ENCODE measurements at regions of chr9 and their contacts with region 1.

Region 1: DNA sequence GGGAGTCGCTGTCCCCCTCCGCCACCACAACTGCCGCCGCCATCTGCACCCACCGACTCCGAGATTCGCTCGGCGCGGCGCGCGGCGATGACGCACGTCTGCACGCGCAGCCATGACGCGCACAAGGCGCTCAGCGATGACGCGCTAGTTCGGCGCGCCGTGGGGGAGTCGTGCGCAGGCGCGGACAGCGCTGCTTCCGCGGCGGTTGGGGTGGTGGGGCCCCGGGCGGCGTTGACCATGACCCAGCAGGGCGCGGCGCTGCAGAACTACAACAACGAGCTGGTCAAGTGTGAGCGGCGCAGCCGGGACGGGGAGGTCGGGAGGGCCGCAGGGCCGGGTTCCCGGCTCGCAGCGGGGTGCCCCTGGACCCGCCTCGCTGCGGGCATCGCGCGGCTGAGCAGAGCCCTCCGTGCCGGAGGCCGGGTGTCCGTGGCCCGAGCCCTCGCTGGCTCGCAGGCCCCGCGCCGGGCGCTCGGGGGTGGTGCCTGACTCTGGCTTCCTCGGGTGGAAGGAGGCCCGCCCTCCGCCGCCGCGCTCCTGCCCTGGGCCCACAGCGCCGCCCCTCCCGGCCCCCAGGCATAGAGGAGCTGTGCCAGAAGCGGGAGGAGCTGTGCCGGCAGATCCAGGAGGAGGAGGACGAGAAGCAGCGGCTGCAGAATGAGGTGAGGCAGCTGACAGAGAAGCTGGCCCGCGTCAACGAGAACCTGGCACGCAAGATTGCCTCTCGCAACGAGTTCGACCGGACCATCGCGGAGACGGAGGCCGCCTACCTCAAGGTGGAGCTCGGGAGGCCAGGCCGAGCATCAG is at the starts of genes ANAPC2 and SSNA1:
- DNase-seq: peak; percentile 79 to 88
- ATAC-seq: peak; percentile 92 to 95
- H3K4me3 ChIP-seq: peak within 1 kb of the TSS; percentile 68 to 100 (median 97)
- H3K27ac ChIP-seq: peak within 1 kb of the TSS; percentile 85 to 98 (median 96)
- H3K4me1 ChIP-seq: peaks cover 39 to 44% of the 10 kb centered on the region in 2 donors
- H3K27me3 ChIP-seq: no peaks in the 10 kb centered on the region
- CTCF ChIP-seq: peak in 4 of 5 experiments; percentile 8 to 72 (median 38)
- POLR2A ChIP-seq: peak; percentile 84 to 92
- total RNA-seq, gene ANAPC2: 10.2 to 12.4 (median 10.8) TPM
- total RNA-seq, gene SSNA1: 73.3 to 164 (median 94.4) TPM

Region 2: GRCh38 chr9:137086531-137087408 is 101.9 kb before region 1 on chr9 and contains the start of gene MAN1B1:
- in situ Hi-C with region 1: no loop called
- intact Hi-C with region 1: loop called (anchors 1 kb)
- DNase-seq: peak; percentile 99
- ATAC-seq: peak; percentile 93 to 94
- H3K4me3 ChIP-seq: peak within 1 kb of the TSS; percentile 67 to 92 (median 78)
- H3K27ac ChIP-seq: peak within 1 kb of the TSS; percentile 91 to 96 (median 92)
- H3K4me1 ChIP-seq: peaks cover 18 to 21% of the 10 kb centered on the region in 2 donors
- H3K27me3 ChIP-seq: no peaks in the 10 kb centered on the region
- CTCF ChIP-seq: peak in 1 of 5 experiments; percentile 23
- POLR2A ChIP-seq: peak; percentile 82 to 83
- total RNA-seq, gene MAN1B1: 15.9 to 31.9 (median 21.1) TPM

Region 3: GRCh38 chr9:137114610-137115391 is 73.9 kb before region 1 on chr9 and contains the start of gene DPP7:
- in situ Hi-C with region 1: no loop called
- intact Hi-C with region 1: loop called (anchors 1 kb)
- DNase-seq: peak; percentile 53 to 67
- ATAC-seq: peak; percentile 91 to 93
- H3K4me3 ChIP-seq: peak within 1 kb of the TSS; percentile 76 to 97 (median 92)
- H3K27ac ChIP-seq: peak within 1 kb of the TSS; percentile 50 to 72 (median 64)
- H3K4me1 ChIP-seq: peaks cover 6 to 9% of the 10 kb centered on the region in 2 donors
- H3K27me3 ChIP-seq: no peaks in the 10 kb centered on the region
- CTCF ChIP-seq: peak in 1 of 5 experiments; percentile 22
- POLR2A ChIP-seq: peak; percentile 51 to 52
- total RNA-seq, gene DPP7: 36.9 to 63.1 (median 55.9) TPM

Region 4: DNA sequence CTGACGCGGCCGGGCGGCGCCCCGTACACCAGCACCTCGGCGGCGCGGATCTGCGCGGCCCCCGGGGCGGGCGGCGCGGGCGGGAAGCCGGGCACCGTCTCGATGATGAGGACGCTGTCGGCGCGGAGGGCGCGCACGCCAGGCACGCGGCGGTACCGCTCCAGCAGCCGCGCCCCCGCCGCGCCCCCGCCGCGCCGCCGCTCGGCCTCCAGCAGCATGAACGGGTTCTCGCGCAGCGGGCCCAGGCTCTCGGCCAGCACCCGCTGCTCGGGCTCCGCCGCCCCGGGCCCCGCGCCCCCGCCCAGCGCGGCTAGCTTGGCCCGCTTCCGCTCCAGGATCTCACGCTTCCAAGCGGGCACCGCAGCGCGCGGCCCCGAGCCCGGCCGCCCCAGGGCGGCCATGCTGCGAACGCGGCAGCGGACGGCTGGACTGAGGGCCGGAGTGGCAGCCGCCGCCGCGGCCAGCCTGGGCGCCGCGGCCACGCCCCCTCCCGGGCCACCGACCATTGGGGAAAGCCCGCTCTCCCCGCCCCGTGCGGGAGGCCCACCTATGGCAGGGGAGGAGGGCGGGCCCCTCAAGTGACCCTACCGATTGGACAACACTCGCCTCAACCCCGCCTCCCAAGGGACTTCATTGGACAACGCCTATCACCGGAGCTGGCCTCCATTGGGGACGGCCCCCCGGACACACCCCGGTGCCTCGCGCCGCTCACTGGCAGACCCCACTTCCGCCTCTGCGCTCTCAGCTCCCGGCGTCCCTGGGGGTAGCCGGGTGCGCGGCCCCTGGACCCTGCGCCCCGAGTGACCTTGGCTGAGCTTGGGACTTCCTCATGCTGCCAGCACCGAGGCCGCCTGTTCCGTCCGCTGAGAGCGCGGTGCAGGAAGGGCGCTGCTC is 11.9 kb after region 1 on chr9 and contains the start of gene TPRN:
- in situ Hi-C with region 1: no loop called
- intact Hi-C with region 1: loop called (anchors 1 kb)
- DNase-seq: peak; percentile 100
- ATAC-seq: peak; percentile 97
- H3K4me3 ChIP-seq: peak within 1 kb of the TSS; percentile 73 to 86 (median 77)
- H3K27ac ChIP-seq: peak within 1 kb of the TSS; percentile 83 to 92 (median 86)
- H3K4me1 ChIP-seq: peaks cover 61 to 70% of the 10 kb centered on the region in 2 donors
- H3K27me3 ChIP-seq: no peaks in the 10 kb centered on the region
- CTCF ChIP-seq: peak in 2 of 5 experiments; percentile 6 to 22
- POLR2A ChIP-seq: peak; percentile 89 to 94
- total RNA-seq, gene TPRN: 3.4 to 10.2 (median 6.3) TPM

Measured in gastrocnemius medialis (tissue), 4 donors.